ENCODE measurements at regions of chr1 and their contacts with region 1.

Region 1: GRCh38 chr1:110619412-110620249 is 13.5 kb upstream of the KCNA2 start:
- DNase-seq: peak; percentile 69
- ATAC-seq: peak; percentile 95
- H3K4me3 ChIP-seq: peak overlapping the region; percentile 64
- H3K27ac ChIP-seq: peak overlapping the region; percentile 57
- H3K4me1 ChIP-seq: peaks cover 16% of the 10 kb centered on the region
- H3K27me3 ChIP-seq: peaks cover 0 to 2% of the 10 kb centered on the region in 2 experiments; a peak in 1 of 4 replicates
- CTCF ChIP-seq: peak; percentile 96 to 97 (median 96)
- EP300 ChIP-seq: 0 out of 4 replicates have a peak, but pooled peaks of 1 of the 2 experiments have one; percentile 26
- POLR2A ChIP-seq: peak; percentile 59
- RAD21 ChIP-seq: peak; percentile 86

Region 2: GRCh38 chr1:110356405-110356804 is 263.2 kb before region 1 on chr1:
- CTCF ChIA-PET with region 1: no interaction called
- POLR2A ChIA-PET with region 1: no interaction called
- RAD21 ChIA-PET with region 1: no interaction called
- SMC1A ChIA-PET with region 1: no interaction called
- in situ Hi-C with region 1: no loop called
- intact Hi-C with region 1: no loop called
- DNase-seq: no peak
- ATAC-seq: peak; percentile 11; the same call in 2 of the 3 replicates
- H3K4me3 ChIP-seq: no peak overlapping the region
- H3K27ac ChIP-seq: no peak overlapping the region
- H3K4me1 ChIP-seq: no peaks in the 10 kb centered on the region
- H3K27me3 ChIP-seq: no peaks in the 10 kb centered on the region
- CTCF ChIP-seq: no peak
- EP300 ChIP-seq: no peak
- POLR2A ChIP-seq: no peak
- RAD21 ChIP-seq: no peak

Region 3: GRCh38 chr1:110524311-110525251 is 95.0 kb before region 1 on chr1:
- CTCF ChIA-PET with region 1: interaction called, 6 read pairs
- POLR2A ChIA-PET with region 1: no interaction called
- RAD21 ChIA-PET with region 1: interaction called, 5 read pairs
- SMC1A ChIA-PET with region 1: interaction called, 6 read pairs
- in situ Hi-C with region 1: no loop called
- intact Hi-C with region 1: loop called (anchors 1 kb)
- DNase-seq: no peak
- ATAC-seq: peak; percentile 89
- H3K4me3 ChIP-seq: no peak overlapping the region
- H3K27ac ChIP-seq: no peak overlapping the region
- H3K4me1 ChIP-seq: no peaks in the 10 kb centered on the region
- H3K27me3 ChIP-seq: peaks cover 0 to 3% of the 10 kb centered on the region in 2 experiments; a peak in 3 of 4 replicates
- CTCF ChIP-seq: peak; percentile 75 to 85 (median 76)
- EP300 ChIP-seq: no peak
- POLR2A ChIP-seq: no peak
- RAD21 ChIP-seq: peak; percentile 78

Region 4: GRCh38 chr1:110630839-110631663 is 11.4 kb after region 1 on chr1:
- CTCF ChIA-PET with region 1: interaction called, 48 read pairs
- POLR2A ChIA-PET with region 1: no interaction called
- RAD21 ChIA-PET with region 1: interaction called, 17 read pairs
- SMC1A ChIA-PET with region 1: interaction called, 7 read pairs
- in situ Hi-C with region 1: no loop called
- intact Hi-C with region 1: loop called (anchors 1 kb)
- DNase-seq: peak; percentile 84
- ATAC-seq: peak; percentile 85
- H3K4me3 ChIP-seq: peak overlapping the region; percentile 10; the same call in 1 of the 2 replicates
- H3K27ac ChIP-seq: peak overlapping the region; percentile 66
- H3K4me1 ChIP-seq: peaks cover 67% of the 10 kb centered on the region
- H3K27me3 ChIP-seq: no peaks in the 10 kb centered on the region
- CTCF ChIP-seq: peak; percentile 84 to 89 (median 86)
- EP300 ChIP-seq: no peak
- POLR2A ChIP-seq: no peak
- RAD21 ChIP-seq: peak; percentile 94

Region 5: DNA sequence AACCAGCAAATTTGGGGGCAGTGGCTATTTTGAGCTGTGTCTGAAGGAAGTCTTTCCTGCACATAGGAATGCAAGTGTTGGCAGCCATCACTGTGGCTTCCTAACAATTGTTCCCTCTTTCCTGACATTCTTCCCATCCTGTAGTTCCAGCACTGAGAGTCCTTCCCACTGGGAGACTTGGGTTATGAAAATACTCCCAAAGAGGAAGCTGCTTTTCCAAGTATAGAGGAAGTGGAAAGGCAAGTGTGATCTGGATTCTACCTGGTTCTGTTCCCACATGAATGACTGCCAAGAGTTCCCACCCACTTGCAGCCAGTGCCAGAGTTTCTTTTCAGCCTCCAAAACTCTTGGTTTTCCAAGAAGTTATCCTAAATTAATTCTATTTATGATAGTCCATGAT is 154.8 kb after region 1 on chr1:
- CTCF ChIA-PET with region 1: interaction called, 91 read pairs
- POLR2A ChIA-PET with region 1: no interaction called
- RAD21 ChIA-PET with region 1: interaction called, 79 read pairs
- SMC1A ChIA-PET with region 1: interaction called, 89 read pairs
- in situ Hi-C with region 1: no loop called
- intact Hi-C with region 1: no loop called
- DNase-seq: no peak
- ATAC-seq: no peak
- H3K4me3 ChIP-seq: no peak overlapping the region
- H3K27ac ChIP-seq: no peak overlapping the region
- H3K4me1 ChIP-seq: peaks cover 4% of the 10 kb centered on the region; the same call in 1 of the 2 replicates
- H3K27me3 ChIP-seq: no peaks in the 10 kb centered on the region
- CTCF ChIP-seq: no peak
- EP300 ChIP-seq: no peak
- POLR2A ChIP-seq: no peak
- RAD21 ChIP-seq: no peak

Region 6: GRCh38 chr1:110986407-110986891 is 366.8 kb after region 1 on chr1:
- CTCF ChIA-PET with region 1: no interaction called
- POLR2A ChIA-PET with region 1: no interaction called
- RAD21 ChIA-PET with region 1: no interaction called
- SMC1A ChIA-PET with region 1: no interaction called
- in situ Hi-C with region 1: no loop called
- intact Hi-C with region 1: loop called (anchors 10 kb)
- DNase-seq: no peak
- ATAC-seq: no peak
- H3K4me3 ChIP-seq: no peak overlapping the region
- H3K27ac ChIP-seq: no peak overlapping the region
- H3K4me1 ChIP-seq: no peaks in the 10 kb centered on the region
- H3K27me3 ChIP-seq: no peaks in the 10 kb centered on the region
- CTCF ChIP-seq: no peak
- EP300 ChIP-seq: no peak
- POLR2A ChIP-seq: no peak
- RAD21 ChIP-seq: no peak

Measured in GM12878 (cell line).